ENCODE measurements at regions of chr17 and their contacts with region 1.

Region 1: DNA sequence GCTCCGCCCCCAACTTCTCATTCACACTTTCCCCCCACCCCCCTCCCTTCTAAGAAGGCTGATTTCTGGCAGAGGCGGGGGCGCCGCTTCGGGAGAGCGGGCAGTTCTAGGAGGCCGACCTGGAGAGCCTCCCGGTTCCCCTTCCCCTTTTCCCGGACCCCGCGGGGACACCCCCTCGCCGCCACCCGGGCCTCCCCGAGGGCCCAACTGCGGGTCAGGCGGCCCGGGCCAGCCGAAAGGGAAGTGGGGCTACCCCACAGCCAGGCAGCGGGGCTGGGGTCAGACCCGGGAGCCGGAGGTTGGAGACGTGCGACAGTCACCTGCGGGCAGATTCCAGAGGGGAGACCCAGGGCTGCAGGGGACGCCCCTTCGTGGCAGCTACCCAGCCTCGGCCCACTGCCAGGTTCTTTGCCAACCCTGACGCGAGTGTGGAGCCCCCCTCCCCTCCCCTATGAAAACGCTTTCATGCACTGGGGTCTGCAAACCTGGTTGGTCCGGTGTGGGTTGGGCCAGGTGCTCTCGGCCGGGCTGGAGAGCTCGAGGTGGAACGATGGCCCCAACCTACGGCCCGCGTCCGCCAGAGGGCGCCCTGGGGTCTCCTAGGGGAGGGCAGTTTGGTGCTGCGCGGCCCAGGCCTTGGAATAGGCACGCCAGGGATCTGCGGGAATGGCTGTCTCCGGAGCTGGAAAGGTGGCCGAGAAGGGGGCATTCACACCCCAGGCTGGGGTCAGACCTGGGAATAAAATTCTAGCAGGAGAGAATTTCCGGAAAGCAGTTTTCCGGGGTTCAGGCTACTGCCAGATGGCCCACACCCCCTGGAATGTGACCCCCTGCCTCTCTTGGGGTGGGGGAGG is 721 bp upstream of the SOCS3 start:
- DNase-seq: no peak
- H3K4me3 ChIP-seq: peak overlapping the region; percentile 71
- H3K27me3 ChIP-seq: no peaks in the 10 kb centered on the region
- CTCF ChIP-seq: peak; percentile 97

Region 2: GRCh38 chr17:78250891-78251794 is 109.5 kb before region 1 on chr17:
- CTCF ChIA-PET with region 1: interaction called, 54 read pairs
- POLR2A ChIA-PET with region 1: no interaction called
- DNase-seq: peak; percentile 16
- H3K4me3 ChIP-seq: no peak overlapping the region
- H3K27me3 ChIP-seq: no peaks in the 10 kb centered on the region; the same call in 1 of the 2 replicates
- CTCF ChIP-seq: peak; percentile 100

Region 3: GRCh38 chr17:78289802-78290363 is 70.7 kb before region 1 on chr17:
- CTCF ChIA-PET with region 1: interaction called, 39 read pairs
- POLR2A ChIA-PET with region 1: no interaction called
- DNase-seq: peak; percentile 43
- H3K4me3 ChIP-seq: no peak overlapping the region
- H3K27me3 ChIP-seq: no peaks in the 10 kb centered on the region
- CTCF ChIP-seq: peak; percentile 79

Region 4: GRCh38 chr17:78307872-78308638 is 52.5 kb before region 1 on chr17:
- CTCF ChIA-PET with region 1: no interaction called
- POLR2A ChIA-PET with region 1: no interaction called
- DNase-seq: no peak
- H3K4me3 ChIP-seq: no peak overlapping the region
- H3K27me3 ChIP-seq: no peaks in the 10 kb centered on the region
- CTCF ChIP-seq: no peak

Region 5: GRCh38 chr17:78378225-78379130 is 17.9 kb after region 1 on chr17 and contains the start of gene PGS1:
- CTCF ChIA-PET with region 1: interaction called, 57 read pairs
- POLR2A ChIA-PET with region 1: no interaction called
- DNase-seq: no peak
- H3K4me3 ChIP-seq: peak within 1 kb of the TSS; percentile 92
- H3K27me3 ChIP-seq: no peaks in the 10 kb centered on the region
- CTCF ChIP-seq: no peak
- polyA plus RNA-seq, gene PGS1: 26.7 and 37.7 TPM in 2 replicates

Region 6: GRCh38 chr17:78390241-78391050 is 29.8 kb after region 1 on chr17:
- CTCF ChIA-PET with region 1: interaction called, 11 read pairs
- POLR2A ChIA-PET with region 1: interaction called, 3 read pairs
- DNase-seq: peak; percentile 96
- H3K4me3 ChIP-seq: no peak overlapping the region
- H3K27me3 ChIP-seq: no peaks in the 10 kb centered on the region
- CTCF ChIP-seq: peak; percentile 19; the same call in 1 of the 2 replicates

Region 7: DNA sequence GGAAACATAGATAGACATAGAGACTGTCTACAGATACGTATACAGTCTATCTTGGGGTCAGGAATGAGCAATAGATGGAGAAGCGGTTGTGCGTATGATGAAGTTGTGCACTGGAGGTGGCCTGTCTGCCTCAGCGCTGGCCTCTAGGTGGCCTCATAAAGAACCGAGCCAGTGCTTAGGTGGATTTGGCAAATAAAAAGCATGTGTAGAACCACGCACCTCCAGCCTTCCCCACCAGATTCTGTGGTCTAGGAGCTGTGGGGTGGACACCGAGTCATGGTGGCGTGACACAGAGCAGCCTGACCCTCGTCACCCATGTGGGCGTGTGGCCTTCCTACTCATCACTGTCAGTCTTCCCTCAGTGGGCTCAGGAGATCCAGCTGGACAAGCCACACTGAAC is 51.8 kb after region 1 on chr17:
- CTCF ChIA-PET with region 1: interaction called, 273 read pairs
- POLR2A ChIA-PET with region 1: no interaction called
- DNase-seq: no peak
- H3K4me3 ChIP-seq: no peak overlapping the region
- H3K27me3 ChIP-seq: no peaks in the 10 kb centered on the region
- CTCF ChIP-seq: peak; percentile 49

Region 8: GRCh38 chr17:78421484-78422266 is 61.1 kb after region 1 on chr17:
- CTCF ChIA-PET with region 1: interaction called, 273 read pairs
- POLR2A ChIA-PET with region 1: no interaction called
- DNase-seq: peak; percentile 9
- H3K4me3 ChIP-seq: no peak overlapping the region
- H3K27me3 ChIP-seq: no peaks in the 10 kb centered on the region
- CTCF ChIP-seq: peak; percentile 99